ENCODE measurements at regions of chr4 and their contacts with region 1.

Region 1: GRCh38 chr4:141746026-141746425 is 109.6 kb downstream of the IL15 start:
- DNase-seq: peak; percentile 78
- H3K4me3 ChIP-seq: no peak overlapping the region
- H3K27ac ChIP-seq: peak overlapping the region; percentile 20
- H3K4me1 ChIP-seq: peaks cover 9% of the 10 kb centered on the region
- H3K27me3 ChIP-seq: no peaks in the 10 kb centered on the region
- CTCF ChIP-seq: no peak
- POLR2A ChIP-seq: no peak

Region 2: GRCh38 chr4:141614878-141615586 is 131.0 kb before region 1 on chr4:
- CTCF ChIA-PET with region 1: no interaction called
- POLR2A ChIA-PET with region 1: no interaction called
- dilution Hi-C with region 1: no loop called
- intact Hi-C with region 1: no loop called
- DNase-seq: peak; percentile 92
- H3K4me3 ChIP-seq: no peak overlapping the region
- H3K27ac ChIP-seq: peak overlapping the region; percentile 17
- H3K4me1 ChIP-seq: peaks cover 8% of the 10 kb centered on the region
- H3K27me3 ChIP-seq: no peaks in the 10 kb centered on the region
- CTCF ChIP-seq: no peak
- POLR2A ChIP-seq: no peak

Region 3: DNA sequence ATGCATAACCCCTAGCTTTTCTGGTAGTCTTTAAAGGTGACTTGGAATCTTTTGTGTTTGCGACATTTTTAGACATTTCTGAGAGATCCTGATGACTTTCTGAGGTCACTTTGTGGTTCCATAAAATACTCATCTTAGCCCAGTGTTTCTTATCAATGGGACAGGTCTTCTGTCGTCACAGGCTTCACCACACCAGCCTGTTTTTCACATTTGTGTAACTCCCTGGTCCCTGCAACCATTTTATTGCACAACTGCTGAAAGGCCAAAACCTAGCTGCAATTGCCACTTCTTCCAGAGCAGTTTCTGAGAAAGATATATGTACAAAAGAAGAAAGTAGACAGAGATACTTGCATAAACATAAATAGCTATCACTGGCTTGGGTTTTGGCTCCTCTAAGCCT is 11.3 kb after region 1 on chr4:
- CTCF ChIA-PET with region 1: no interaction called
- POLR2A ChIA-PET with region 1: no interaction called
- dilution Hi-C with region 1: no loop called
- intact Hi-C with region 1: no loop called
- DNase-seq: no peak
- H3K4me3 ChIP-seq: no peak overlapping the region
- H3K27ac ChIP-seq: no peak overlapping the region
- H3K4me1 ChIP-seq: peaks cover 20% of the 10 kb centered on the region
- H3K27me3 ChIP-seq: no peaks in the 10 kb centered on the region
- CTCF ChIP-seq: no peak
- POLR2A ChIP-seq: no peak

Region 4: DNA sequence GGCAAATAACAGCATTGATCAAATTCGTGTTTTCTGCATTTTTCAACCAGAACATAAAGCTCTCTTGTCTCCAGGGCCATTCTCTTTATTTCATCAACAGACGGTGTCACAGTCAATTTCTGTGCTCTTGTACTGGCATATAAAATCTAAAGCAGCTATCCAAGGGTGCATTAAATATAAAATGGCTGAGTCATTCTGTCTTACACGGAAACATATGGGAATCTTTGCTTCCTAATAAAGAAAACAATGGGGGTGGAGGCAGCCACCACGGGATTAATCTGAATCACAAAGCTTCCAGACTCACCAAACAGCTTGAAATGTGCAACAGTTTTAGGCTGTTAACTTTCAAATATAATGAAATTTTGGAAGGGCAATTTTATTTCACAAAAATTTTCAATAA is 22.9 kb after region 1 on chr4:
- CTCF ChIA-PET with region 1: no interaction called
- POLR2A ChIA-PET with region 1: no interaction called
- dilution Hi-C with region 1: no loop called
- intact Hi-C with region 1: loop called (anchors 1 kb)
- DNase-seq: peak; percentile 93
- H3K4me3 ChIP-seq: no peak overlapping the region
- H3K27ac ChIP-seq: peak overlapping the region; percentile 87
- H3K4me1 ChIP-seq: peaks cover 13% of the 10 kb centered on the region
- H3K27me3 ChIP-seq: no peaks in the 10 kb centered on the region
- CTCF ChIP-seq: no peak
- POLR2A ChIP-seq: no peak